Sigmoid colon (tissue), 7 donors: ENCODE measurements at regions of chr12 and their contacts with region 1.

Region 1: DNA sequence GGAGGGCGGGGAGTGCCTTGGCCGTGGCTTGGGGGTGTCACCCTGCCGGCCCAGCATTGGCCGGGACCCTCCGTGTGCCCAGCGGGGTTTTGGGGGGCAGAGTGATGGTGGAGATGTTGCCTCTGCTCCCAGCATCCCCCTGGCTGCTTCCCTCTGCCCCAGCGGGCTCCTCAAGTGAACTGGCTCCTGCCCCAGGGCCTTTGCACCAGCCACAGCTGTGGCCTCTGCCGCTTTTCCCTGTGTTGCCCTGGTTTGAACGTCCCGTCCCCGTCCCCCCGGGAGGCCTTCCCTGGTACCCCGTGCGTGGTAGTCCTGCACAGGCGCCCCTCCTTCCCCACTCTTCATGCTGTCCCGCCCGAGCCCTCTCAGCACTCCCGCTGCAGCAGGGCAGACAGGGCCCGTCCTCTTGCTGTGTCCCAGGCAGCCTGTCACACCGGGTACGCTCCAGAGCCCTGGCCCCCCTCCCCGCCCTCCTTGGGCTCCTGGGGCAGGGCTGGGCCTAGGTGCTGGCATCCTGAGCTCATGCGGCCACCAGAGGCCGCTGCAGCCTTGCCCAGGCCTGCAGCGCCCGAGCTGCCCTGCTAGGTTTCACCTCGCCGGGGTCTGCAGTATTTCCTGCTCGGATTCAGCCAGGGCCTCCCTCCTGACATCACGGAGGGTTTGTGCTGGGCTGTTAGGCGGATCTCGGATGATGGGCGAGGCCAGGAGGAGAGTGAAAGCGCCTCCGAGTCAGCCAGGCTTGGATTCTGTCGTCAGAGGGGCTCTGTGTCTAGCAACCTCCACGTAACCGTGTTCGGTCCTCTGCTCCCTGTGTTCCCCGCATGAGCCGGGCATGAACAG is 9.5 kb downstream of the NOC4L start:
- DNase-seq: peak; percentile 82
- H3K4me3 ChIP-seq: peak overlapping the region in 3 of 4 donors; percentile 31 to 34 (median 33)
- H3K27ac ChIP-seq: no peak overlapping the region
- H3K4me1 ChIP-seq: peaks cover 0 to 11% (median 7%) of the 10 kb centered on the region in 4 donors
- H3K27me3 ChIP-seq: no peaks in the 10 kb centered on the region
- CTCF ChIP-seq: peak; percentile 79 to 94 (median 89)
- EP300 ChIP-seq: no peak
- POLR2A ChIP-seq: no peak

Region 2: DNA sequence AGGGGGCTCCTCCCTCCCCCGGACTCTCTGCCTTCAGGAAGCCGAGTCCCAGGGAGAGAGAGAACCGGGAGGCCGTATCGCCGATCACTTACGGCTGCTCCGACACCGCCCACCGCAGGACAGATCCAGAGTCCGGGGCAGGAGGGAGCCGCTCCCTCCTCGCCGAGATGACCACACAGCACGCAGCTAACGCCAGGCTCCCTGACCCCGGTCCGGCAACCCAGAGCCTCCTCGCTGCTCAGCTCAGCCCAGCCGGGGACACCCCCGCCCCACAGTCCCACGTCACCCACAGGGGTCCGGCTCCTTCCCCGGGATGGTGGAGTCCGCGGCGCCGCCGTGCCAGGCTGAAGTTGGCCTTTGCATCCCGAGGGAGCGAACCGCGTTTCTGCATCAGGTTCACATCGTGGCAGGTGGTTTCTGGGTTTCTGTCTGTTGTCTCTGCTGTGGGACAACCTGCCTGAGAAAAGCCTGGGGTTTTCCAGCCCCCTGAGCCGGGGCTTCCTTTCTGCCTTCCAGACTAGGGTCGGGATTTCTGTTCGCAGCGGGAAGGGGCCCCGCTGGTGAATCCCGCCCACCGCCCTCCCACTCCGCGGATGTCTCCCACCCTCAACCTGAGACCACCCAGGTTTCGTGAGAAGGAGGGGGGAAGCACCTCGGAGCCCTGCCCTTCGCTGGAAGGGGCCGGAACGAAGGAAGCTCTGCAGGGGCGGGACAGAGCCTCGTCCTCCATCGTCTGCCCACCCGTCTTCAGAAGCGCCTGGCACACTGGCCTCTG is 51.7 kb after region 1 on chr12:
- intact Hi-C with region 1: loop called (anchors 10 kb)
- DNase-seq: no peak
- H3K4me3 ChIP-seq: peak overlapping the region in 3 of 4 donors; percentile 8 to 31 (median 30)
- H3K27ac ChIP-seq: no peak overlapping the region
- H3K4me1 ChIP-seq: peaks cover 0 to 20% (median 17%) of the 10 kb centered on the region in 4 donors
- H3K27me3 ChIP-seq: peaks cover 22 to 68% (median 56%) of the 10 kb centered on the region in 3 donors
- CTCF ChIP-seq: no peak
- EP300 ChIP-seq: no peak
- POLR2A ChIP-seq: no peak

Region 3: GRCh38 chr12:132275110-132275531 is 121.4 kb after region 1 on chr12:
- intact Hi-C with region 1: loop called (anchors 10 kb)
- DNase-seq: no peak
- H3K4me3 ChIP-seq: no peak overlapping the region
- H3K27ac ChIP-seq: no peak overlapping the region
- H3K4me1 ChIP-seq: peaks cover 0 to 40% (median 33%) of the 10 kb centered on the region in 4 donors
- H3K27me3 ChIP-seq: peaks cover 0 to 36% (median 31%) of the 10 kb centered on the region in 3 donors
- CTCF ChIP-seq: no peak
- EP300 ChIP-seq: no peak
- POLR2A ChIP-seq: no peak

Region 4: DNA sequence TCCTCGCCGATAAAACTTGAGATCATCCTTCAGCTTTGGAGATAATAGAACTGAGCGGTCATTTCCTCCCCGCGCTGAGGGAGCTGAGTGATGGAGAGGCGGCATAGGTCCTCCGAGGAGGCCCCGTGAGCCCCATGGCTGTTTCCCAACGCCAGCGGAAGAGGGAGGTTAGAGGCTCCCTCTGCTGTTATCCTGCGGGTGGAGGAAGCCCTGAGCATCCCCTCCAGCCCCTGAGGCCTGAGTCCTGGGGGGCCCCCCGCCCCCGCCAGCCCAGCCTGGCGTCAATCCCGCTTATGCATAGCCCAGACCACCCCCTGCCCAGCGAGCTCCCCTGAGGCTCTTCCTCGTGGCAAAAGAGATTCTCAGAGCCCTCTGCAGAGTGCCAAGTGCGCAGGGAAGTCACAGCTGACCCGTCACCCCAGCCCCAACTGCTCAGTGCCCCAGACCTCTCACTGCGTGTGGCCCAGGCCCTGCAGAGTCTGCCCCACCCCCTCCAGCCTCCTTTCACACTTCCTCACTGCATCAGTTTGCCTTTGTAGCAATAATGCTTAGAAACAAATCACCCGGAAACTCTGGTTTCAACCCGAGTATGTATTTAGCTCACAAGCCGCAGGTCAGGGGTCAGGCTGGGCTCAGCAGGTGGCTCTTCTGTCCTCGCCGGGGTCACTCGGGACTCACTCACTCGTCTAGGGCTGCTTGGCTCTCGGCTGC is 220.3 kb after region 1 on chr12:
- intact Hi-C with region 1: loop called (anchors 2 kb)
- DNase-seq: peak; percentile 75
- H3K4me3 ChIP-seq: no peak overlapping the region
- H3K27ac ChIP-seq: no peak overlapping the region
- H3K4me1 ChIP-seq: no peaks in the 10 kb centered on the region
- H3K27me3 ChIP-seq: peaks cover 25 to 84% (median 76%) of the 10 kb centered on the region in 3 donors
- CTCF ChIP-seq: peak in 1 of 4 experiments; percentile 33
- EP300 ChIP-seq: no peak
- POLR2A ChIP-seq: no peak

Region 5: DNA sequence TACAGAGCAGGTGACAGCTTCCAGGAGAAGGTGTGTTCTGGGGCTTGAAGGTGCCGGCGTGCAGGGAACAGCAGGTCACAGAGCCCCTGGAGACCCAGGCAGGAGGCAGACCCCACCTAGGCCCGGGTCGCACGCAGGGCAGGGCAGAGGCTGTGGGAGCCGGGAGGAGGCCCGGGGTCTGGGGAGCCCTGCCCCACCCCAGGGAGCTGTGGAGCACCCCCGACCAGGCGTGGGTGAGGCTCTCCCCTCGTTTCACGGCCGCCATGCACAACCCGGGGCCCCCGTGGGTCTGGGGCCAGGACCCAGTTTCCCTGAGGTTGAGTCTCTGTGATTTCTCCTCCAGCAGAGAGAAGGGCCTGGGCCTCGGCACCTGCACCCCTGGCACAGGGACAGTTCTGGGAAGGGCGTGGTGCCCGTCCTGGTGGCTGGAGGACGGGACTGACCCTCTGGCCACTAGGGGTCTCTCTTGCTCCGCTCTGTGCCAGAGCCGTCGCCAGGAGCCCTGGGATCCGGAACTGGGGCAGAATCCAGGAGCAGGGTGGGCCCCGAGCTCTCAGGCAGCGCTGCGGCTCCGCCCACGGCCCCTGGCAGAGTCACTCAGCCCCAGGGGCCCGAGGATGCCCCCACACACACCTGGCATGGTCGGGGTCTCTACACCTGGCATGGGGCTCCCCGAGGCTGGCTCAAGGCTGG is 261.1 kb after region 1 on chr12:
- intact Hi-C with region 1: loop called (anchors 10 kb)
- DNase-seq: peak; percentile 85
- H3K4me3 ChIP-seq: no peak overlapping the region
- H3K27ac ChIP-seq: no peak overlapping the region
- H3K4me1 ChIP-seq: peaks cover 0 to 11% (median 9%) of the 10 kb centered on the region in 4 donors
- H3K27me3 ChIP-seq: peaks cover 6 to 58% (median 46%) of the 10 kb centered on the region in 3 donors
- CTCF ChIP-seq: peak; percentile 76 to 94 (median 80)
- EP300 ChIP-seq: no peak
- POLR2A ChIP-seq: no peak